ENCODE measurements at regions of chr14 and their contacts with region 1.

Region 1: DNA sequence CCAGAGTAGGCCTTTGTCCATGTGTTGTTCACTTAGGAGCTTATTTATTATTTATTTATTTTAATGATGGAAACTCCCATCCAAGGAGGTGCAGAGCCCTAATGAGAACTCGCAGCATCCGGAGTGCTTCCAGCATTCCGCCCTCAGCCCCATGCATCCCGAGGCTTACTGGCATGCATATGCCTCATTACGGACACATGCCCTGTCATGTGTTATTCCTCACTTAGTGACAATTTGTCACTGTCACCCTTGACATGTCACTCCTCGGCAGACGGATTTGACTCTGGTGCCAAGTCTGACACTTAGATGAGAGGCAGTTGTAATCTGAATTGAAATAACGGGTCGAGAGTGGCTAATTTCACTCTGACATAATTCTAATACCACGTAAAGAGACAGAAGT is 132.8 kb downstream of the VRK1 start:
- DNase-seq: no peak

Region 2: DNA sequence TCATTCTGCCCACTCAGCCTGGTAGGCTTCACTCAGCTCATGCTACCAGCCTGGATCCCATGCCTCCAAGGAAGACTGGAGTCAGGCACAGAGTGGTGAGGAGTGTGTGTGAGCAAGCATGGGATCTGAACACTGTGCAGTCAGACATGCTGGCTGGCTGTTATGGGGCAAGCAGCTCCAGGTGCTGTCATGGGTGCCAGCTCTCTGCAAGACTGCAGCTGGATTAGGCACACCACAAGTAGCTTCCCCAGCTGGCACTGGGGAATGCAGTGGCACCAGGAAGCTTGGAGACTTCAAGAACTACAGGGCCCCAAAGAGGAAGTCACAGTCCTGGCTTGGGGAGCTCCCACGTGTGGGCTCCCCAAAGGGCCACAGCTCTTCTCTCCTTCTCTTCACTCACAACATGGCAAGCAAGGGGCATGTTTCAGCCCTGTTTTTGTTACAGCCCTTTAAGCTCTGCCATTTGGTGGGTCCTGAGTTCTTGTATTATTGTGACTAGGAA is 69.8 kb after region 1 on chr14:
- intact Hi-C with region 1: no loop called
- DNase-seq: no peak

Region 3: DNA sequence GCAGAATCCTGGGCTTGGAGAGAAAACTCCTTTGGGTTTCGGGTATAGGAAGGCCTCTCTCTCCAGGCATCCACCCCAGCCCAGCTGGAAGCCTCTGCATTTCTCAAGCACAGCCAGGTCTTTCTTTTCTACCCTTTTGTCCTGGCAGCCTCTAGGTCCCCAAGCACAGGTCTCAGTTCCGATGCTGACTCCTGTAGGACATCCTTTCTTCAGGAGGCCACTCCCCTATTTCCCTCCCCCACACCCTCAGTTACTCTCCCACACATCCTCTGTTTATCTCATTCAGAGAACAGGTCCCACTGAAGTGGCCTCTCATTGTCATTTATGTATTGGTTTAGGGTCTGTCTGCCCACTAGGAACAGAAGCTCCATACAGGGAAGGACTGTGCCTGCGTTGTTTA is 219.8 kb after region 1 on chr14:
- intact Hi-C with region 1: no loop called
- DNase-seq: no peak

Region 4: GRCh38 chr14:97485201-97485600 is 555.3 kb after region 1 on chr14:
- intact Hi-C with region 1: loop called in 1 of 2 experiments (anchors 5 kb)
- DNase-seq: no peak

Measured in posterior vena cava (tissue), 2 donors.